MCF 10A (cell line): ENCODE measurements at regions of chr16 and their contacts with region 1.

Region 1: GRCh38 chr16:4506450-4506849 is 30.3 kb downstream of the HMOX2 start:
- DNase-seq: peak; percentile 74
- H3K4me3 Mint-ChIP-seq: no peak overlapping the region
- H3K27ac Mint-ChIP-seq: no peak overlapping the region
- H3K4me1 Mint-ChIP-seq: no peaks in the 10 kb centered on the region
- H3K27me3 Mint-ChIP-seq: no peaks in the 10 kb centered on the region
- CTCF ChIP-seq: peak; percentile 73

Region 2: DNA sequence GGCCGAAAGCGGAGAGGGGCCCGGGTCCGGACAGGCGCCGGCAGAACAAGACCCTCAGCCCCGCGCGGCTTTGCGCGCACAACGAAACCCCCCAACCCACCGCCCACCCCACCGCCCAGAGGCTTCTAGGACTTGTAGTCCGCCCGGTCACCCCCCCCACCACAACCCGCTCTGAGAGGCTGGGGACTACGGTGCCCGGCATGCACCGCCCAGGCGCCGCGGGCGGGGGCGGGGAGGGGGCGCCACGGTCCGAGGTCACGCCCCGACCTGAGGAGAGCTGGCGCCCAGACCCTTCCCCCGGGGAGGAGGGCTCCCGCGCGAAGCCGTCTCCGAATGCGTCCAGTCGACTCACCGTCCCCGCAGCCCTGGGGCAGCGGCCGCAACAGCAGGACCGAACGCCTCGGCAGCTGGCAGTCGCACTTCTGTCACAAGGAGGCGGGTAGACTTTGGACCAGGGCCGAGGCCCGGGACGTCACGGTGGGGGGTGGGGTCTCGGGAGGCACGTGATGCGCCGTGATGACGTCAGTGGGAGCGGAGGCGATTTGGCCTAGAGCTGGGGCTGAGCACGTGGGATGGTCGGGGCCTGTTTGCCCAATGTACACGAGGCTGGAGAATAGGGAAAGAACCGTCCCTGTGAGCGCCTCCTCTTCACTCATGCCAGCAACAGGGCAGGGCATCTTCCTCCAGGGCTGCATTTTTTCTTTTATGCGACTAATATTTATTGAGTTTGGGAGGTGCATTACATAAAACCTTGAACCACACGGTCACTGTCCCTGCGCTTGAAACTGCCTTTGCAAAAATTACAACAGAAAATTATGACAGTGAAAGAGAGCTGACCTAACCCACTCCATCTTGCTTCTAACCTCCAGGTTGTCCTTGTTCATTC is 32.1 kb after region 1 on chr16 and contains the start of gene CDIP1:
- CTCF ChIA-PET with region 1: interaction called, 10 read pairs
- POLR2A ChIA-PET with region 1: no interaction called
- intact Hi-C with region 1: no loop called
- DNase-seq: peak; percentile 85
- H3K4me3 Mint-ChIP-seq: peak within 1 kb of the TSS; percentile 65
- H3K27ac Mint-ChIP-seq: peak within 1 kb of the TSS; percentile 49
- H3K4me1 Mint-ChIP-seq: no peaks in the 10 kb centered on the region
- H3K27me3 Mint-ChIP-seq: no peaks in the 10 kb centered on the region
- CTCF ChIP-seq: no peak
- total RNA-seq, gene CDIP1: 6.0 and 8.0 TPM in 2 replicates

Region 3: DNA sequence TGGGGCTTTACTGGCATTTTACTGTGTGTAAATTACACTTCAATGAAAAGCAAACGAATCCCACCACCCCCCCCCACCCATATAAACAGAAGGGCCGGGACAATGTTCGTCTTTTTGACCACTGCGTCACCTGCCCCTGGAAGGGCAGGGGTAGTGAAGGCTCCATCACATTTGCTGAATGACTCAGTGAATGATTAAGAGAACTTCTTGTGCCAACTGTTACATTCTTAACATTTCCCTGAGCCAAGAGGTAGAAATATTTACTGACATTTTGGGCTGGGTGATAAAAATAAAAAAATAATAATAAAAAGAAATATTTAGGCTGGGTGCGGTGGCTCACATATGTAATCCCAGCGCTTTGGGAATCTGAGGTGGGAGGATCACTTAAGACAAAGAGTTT is 73.8 kb after region 1 on chr16:
- CTCF ChIA-PET with region 1: interaction called, 86 read pairs
- POLR2A ChIA-PET with region 1: interaction called, 3 read pairs
- intact Hi-C with region 1: loop called (anchors 1 kb)
- DNase-seq: peak; percentile 55
- H3K4me3 Mint-ChIP-seq: no peak overlapping the region
- H3K27ac Mint-ChIP-seq: peak overlapping the region; percentile 88
- H3K4me1 Mint-ChIP-seq: peaks cover 11% of the 10 kb centered on the region
- H3K27me3 Mint-ChIP-seq: no peaks in the 10 kb centered on the region
- CTCF ChIP-seq: no peak

Region 4: GRCh38 chr16:4601036-4601863 is 94.8 kb after region 1 on chr16:
- CTCF ChIA-PET with region 1: interaction called, 15 read pairs
- POLR2A ChIA-PET with region 1: no interaction called
- intact Hi-C with region 1: no loop called
- DNase-seq: no peak
- H3K4me3 Mint-ChIP-seq: no peak overlapping the region
- H3K27ac Mint-ChIP-seq: no peak overlapping the region
- H3K4me1 Mint-ChIP-seq: no peaks in the 10 kb centered on the region
- H3K27me3 Mint-ChIP-seq: peaks cover 11% of the 10 kb centered on the region
- CTCF ChIP-seq: no peak

Region 5: GRCh38 chr16:4624015-4624826 is 117.8 kb after region 1 on chr16 and contains the start of gene MGRN1:
- CTCF ChIA-PET with region 1: interaction called, 16 read pairs
- POLR2A ChIA-PET with region 1: interaction called, 3 read pairs
- intact Hi-C with region 1: no loop called
- DNase-seq: peak; percentile 97
- H3K4me3 Mint-ChIP-seq: peak within 1 kb of the TSS; percentile 99
- H3K27ac Mint-ChIP-seq: peak within 1 kb of the TSS; percentile 99
- H3K4me1 Mint-ChIP-seq: peaks cover 13% of the 10 kb centered on the region
- H3K27me3 Mint-ChIP-seq: no peaks in the 10 kb centered on the region
- CTCF ChIP-seq: peak; percentile 89
- total RNA-seq, gene MGRN1: 61.3 and 62.9 TPM in 2 replicates